Mammary epithelial cell (primary cell): ENCODE measurements at regions of chr11 and their contacts with region 1.

Region 1: DNA sequence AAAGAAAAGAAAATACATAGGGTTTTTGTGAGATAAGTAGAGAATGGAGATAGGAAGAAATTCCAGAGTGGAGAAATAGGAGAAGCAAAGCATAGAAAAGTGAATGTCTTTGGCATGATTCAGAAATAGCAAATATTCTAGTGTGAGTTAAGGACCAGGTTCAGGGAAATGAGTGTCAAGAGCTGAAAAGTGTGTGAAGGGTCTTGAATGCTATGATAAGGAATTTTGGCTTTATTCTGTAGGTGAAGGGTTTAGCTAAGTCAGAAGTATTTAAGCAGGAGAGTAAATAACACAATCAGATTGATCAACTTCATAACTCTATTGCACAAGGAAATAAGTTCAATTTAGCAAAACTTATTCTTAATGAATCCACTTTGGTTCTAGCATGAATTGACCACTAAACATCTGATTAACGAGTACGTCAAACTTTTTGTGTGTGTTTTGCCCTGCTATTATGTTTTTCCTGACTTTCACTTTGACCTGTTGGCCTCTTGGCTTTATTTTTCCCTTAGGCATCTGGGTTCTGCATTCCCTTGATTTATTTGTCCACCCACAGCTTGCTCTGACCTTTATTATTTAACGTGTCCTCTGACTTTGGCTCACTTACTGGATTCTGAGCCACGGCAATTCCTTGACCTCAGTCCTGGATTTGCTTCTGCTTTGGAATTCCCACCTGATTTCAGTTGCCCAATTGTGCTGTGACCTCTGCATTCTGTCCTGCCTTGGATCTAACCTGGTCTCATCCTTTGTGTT is 11.9 kb upstream of the TMEM218 start:
- DNase-seq: no peak
- H3K4me3 ChIP-seq: no peak overlapping the region
- H3K27ac ChIP-seq: no peak overlapping the region
- H3K4me1 ChIP-seq: no peaks in the 10 kb centered on the region
- H3K27me3 ChIP-seq: no peaks in the 10 kb centered on the region
- CTCF ChIP-seq: no peak

Region 2: GRCh38 chr11:125164422-125165110 is 41.2 kb after region 1 on chr11 and contains the start of gene PKNOX2:
- CTCF ChIA-PET with region 1: interaction called, 24 read pairs
- dilution Hi-C with region 1: no loop called
- in situ Hi-C with region 1: no loop called
- intact Hi-C with region 1: no loop called
- DNase-seq: peak; percentile 47
- H3K4me3 ChIP-seq: peak within 1 kb of the TSS; percentile 56 to 69 (median 59)
- H3K27ac ChIP-seq: no peak within 1 kb of the TSS
- H3K4me1 ChIP-seq: peaks cover 12% of the 10 kb centered on the region
- H3K27me3 ChIP-seq: peaks cover 11% of the 10 kb centered on the region
- CTCF ChIP-seq: peak; percentile 28 to 70
- total RNA-seq, gene PKNOX2: 0.16 to 0.33 TPM

Region 3: GRCh38 chr11:125192183-125192582 is 68.8 kb after region 1 on chr11:
- CTCF ChIA-PET with region 1: no interaction called
- dilution Hi-C with region 1: no loop called
- in situ Hi-C with region 1: no loop called
- intact Hi-C with region 1: no loop called
- DNase-seq: no peak
- H3K4me3 ChIP-seq: no peak overlapping the region
- H3K27ac ChIP-seq: no peak overlapping the region
- H3K4me1 ChIP-seq: peaks cover 6% of the 10 kb centered on the region
- H3K27me3 ChIP-seq: no peaks in the 10 kb centered on the region
- CTCF ChIP-seq: no peak